AG04450 (cell line): ENCODE measurements at regions of chr3 and their contacts with region 1.

Region 1: DNA sequence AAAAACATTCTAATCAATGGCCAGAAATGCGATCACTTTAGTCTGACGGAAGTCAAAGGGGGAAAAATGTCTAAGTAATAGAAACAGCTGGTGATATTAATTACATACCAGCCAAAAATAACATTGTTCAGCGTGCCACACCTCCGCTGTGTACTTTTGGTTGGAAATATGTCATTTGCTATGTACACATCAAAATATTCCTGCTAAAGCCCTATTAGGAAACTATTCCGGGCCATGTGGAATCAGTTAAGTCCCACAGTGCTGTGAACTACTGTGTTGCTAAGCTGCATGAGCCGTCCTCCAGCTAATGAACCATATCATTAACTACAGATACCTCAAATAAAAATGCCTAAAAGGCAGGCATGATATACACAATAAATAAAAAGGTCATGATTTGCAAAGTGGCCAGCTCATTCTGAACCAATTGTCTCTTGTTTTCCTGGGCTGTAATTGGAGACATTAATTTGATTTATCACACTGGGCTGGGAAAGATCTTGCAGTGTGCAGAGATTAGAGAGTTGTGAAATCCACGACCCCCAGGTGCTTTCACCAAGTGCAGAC is 200.5 kb upstream of the LRTM1 start:
- DNase-seq: no peak
- H3K4me3 ChIP-seq: no peak overlapping the region
- H3K27ac ChIP-seq: no peak overlapping the region
- H3K27me3 ChIP-seq: no peaks in the 10 kb centered on the region
- CTCF ChIP-seq: no peak

Region 2: DNA sequence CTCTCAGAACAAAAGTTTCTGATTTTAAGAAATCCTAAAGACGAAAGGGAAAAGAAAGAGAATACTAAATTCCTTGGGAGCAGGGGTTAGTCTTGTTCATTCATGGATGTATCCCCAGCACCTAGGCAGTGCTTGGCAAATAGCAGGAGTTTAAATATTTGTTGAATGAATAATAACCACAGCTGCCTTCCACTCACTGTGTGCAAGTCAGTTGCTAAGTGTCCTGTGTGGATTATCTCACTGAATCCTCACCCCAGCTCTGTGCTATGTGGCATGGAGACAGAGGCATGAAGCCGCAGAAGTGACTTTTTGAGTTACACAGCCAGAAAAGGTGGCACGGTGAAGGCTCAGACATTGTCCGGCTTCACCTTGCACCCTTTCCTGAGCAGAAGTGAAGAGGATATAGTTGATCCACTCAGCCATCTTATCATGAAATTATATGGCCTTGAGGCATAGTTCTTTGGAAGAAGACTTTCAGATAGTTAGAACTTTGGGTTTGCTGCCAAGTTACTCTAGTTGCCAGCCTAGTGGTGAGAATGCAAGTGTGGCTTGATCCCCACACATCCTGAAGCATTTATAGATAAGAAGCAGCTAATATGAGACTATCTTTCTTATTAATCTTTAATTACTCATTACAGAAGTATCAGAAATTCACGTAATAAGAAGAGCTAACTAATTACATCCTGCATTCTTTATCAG is 556.0 kb before region 1 on chr3:
- CTCF ChIA-PET with region 1: no interaction called
- POLR2A ChIA-PET with region 1: no interaction called
- DNase-seq: no peak
- H3K4me3 ChIP-seq: no peak overlapping the region
- H3K27ac ChIP-seq: no peak overlapping the region
- H3K27me3 ChIP-seq: no peaks in the 10 kb centered on the region
- CTCF ChIP-seq: no peak

Region 3: GRCh38 chr3:54600441-54601204 is 527.7 kb before region 1 on chr3:
- CTCF ChIA-PET with region 1: no interaction called
- POLR2A ChIA-PET with region 1: no interaction called
- DNase-seq: no peak
- H3K4me3 ChIP-seq: no peak overlapping the region
- H3K27ac ChIP-seq: no peak overlapping the region
- H3K27me3 ChIP-seq: no peaks in the 10 kb centered on the region
- CTCF ChIP-seq: no peak

Region 4: GRCh38 chr3:55144015-55144673 is 15.8 kb after region 1 on chr3:
- CTCF ChIA-PET with region 1: no interaction called
- POLR2A ChIA-PET with region 1: no interaction called
- DNase-seq: no peak
- H3K4me3 ChIP-seq: no peak overlapping the region
- H3K27ac ChIP-seq: no peak overlapping the region
- H3K27me3 ChIP-seq: no peaks in the 10 kb centered on the region
- CTCF ChIP-seq: no peak

Region 5: GRCh38 chr3:55343486-55344357 is 215.4 kb after region 1 on chr3:
- CTCF ChIA-PET with region 1: no interaction called
- POLR2A ChIA-PET with region 1: interaction called, 11 read pairs
- DNase-seq: no peak
- H3K4me3 ChIP-seq: no peak overlapping the region
- H3K27ac ChIP-seq: no peak overlapping the region
- H3K27me3 ChIP-seq: no peaks in the 10 kb centered on the region
- CTCF ChIP-seq: no peak

Region 6: GRCh38 chr3:55534876-55535275 is 406.6 kb after region 1 on chr3:
- CTCF ChIA-PET with region 1: no interaction called
- POLR2A ChIA-PET with region 1: no interaction called
- DNase-seq: no peak
- H3K4me3 ChIP-seq: no peak overlapping the region
- H3K27ac ChIP-seq: no peak overlapping the region
- H3K27me3 ChIP-seq: peaks cover 4% of the 10 kb centered on the region
- CTCF ChIP-seq: no peak